A549 (cell line): ENCODE measurements at regions of chr5 and their contacts with region 1.

Region 1: DNA sequence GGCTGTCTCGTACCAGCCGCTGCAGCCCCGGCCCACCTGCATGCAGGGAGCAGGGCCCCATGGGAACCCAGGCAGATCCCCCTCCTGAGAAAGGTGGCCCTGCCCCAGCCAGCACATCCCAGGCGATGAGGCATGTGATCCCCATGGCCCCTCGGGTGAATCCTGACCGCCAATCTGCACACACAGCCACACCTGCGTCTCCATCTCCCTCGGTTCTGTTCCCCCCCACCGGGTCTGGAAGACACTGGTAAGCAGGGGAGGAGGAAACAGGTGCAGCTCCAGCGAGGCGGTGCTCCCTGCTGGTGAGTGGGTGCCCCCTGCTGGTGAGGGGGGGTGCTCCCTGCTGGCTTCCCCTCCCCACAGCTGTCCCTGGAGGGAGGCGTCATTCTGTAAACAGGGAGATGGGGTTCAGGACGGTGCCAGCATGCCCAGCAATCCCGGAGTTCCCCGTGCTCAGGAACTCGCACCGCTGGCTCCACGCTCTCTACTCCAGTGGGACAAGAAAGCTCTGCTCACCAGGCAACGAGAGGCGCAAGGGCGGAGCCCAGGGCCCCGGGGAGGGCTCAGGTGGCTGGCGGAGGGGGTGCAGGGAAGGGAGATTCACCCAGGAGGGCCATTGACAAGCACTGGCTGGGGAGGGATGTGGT is 28.4 kb upstream of the SLC12A7 start:
- DNase-seq: peak; percentile 67
- ATAC-seq: peak; percentile 74 to 87
- H3K4me3 ChIP-seq: no peak overlapping the region
- H3K27ac ChIP-seq: 0 out of 6 replicates have a peak overlapping the region, but pooled peaks of 1 of the 2 experiments have one; percentile 24
- H3K4me1 ChIP-seq: peaks cover 5% of the 10 kb centered on the region; the same call in 2 of the 3 replicates
- CTCF ChIP-seq: peak; percentile 82
- EP300 ChIP-seq: no peak
- POLR2A ChIP-seq: no peak
- RAD21 ChIP-seq: peak; percentile 89 to 91

Region 2: DNA sequence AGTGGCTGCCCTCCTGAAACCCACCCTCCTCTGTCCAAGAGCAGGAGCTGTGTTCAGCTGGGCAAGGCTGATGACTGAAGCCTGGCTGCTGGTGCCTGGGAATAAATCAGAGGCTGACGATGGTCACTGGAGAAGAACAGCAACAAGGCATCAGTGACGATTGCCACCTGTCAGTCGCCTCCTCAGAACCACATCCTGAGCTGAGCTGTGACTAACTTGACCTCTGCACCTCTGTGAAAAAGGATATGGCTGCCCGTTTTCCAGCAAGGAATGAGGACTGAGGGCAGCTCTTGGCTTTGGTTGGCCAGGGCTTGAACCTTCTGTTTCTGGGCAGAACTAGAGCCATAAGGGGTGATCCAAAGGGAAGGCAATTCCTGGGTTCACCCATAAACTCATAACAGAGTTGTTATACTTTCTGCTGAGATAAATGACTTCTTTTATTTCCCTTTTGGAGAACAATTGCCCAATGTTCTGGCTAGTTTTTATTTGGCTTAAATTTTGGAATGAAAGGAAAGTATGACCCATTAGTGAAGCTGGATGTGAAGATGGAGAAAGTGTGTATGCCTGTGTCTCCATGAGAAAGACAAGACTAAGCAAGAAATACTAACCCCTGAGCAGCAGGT is 207.6 kb before region 1 on chr5:
- CTCF ChIA-PET with region 1: interaction called, 11 read pairs
- POLR2A ChIA-PET with region 1: no interaction called
- DNase-seq: no peak
- ATAC-seq: no peak
- H3K4me3 ChIP-seq: no peak overlapping the region
- H3K27ac ChIP-seq: no peak overlapping the region
- H3K4me1 ChIP-seq: no peaks in the 10 kb centered on the region
- CTCF ChIP-seq: no peak
- EP300 ChIP-seq: no peak
- POLR2A ChIP-seq: no peak
- RAD21 ChIP-seq: no peak

Region 3: DNA sequence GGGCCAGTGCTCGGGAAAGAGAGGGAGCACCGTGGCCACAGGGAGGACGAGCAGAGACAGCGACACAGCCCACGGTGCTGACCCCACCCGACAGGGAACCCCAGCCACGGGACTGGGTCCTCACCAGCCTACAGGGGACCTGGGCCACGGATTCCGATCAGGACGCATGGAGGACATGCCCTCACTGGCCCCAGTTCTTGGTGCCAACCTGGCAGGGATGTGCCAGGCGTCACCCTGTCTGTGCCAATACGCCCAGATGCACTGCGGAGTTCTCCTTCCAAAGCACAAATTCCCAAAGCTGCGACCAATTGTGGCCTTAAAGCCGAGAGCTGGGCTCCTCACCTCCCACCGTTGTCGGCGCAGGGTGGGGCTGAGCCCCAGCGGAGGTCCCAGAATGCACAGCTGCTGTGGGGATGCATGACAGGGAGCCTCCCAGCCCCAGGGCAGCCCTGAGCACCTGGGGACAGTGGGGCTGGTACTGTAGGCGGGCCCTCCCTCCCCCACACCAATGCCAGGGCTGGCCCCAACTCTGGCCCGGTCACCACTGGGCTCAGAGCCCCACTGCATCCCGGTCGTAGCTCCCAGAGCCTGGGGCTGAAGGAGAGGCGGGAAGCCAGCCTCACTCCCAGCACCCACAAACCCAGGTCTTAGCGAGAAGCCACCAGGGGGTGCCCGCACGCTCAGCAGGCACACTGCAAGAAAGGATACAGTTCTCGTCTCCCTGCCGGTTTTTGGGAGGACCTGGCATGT is 87.5 kb before region 1 on chr5:
- CTCF ChIA-PET with region 1: interaction called, 25 read pairs
- POLR2A ChIA-PET with region 1: no interaction called
- DNase-seq: peak in 1 of 2 experiments; percentile 45
- ATAC-seq: peak in 1 of 2 experiments; percentile 52; a peak in 2 of 6 replicates
- H3K4me3 ChIP-seq: no peak overlapping the region
- H3K27ac ChIP-seq: no peak overlapping the region
- H3K4me1 ChIP-seq: no peaks in the 10 kb centered on the region
- CTCF ChIP-seq: 0 out of 3 replicates have a peak, but pooled peaks have one; percentile 16
- EP300 ChIP-seq: no peak
- POLR2A ChIP-seq: no peak
- RAD21 ChIP-seq: no peak

Region 4: DNA sequence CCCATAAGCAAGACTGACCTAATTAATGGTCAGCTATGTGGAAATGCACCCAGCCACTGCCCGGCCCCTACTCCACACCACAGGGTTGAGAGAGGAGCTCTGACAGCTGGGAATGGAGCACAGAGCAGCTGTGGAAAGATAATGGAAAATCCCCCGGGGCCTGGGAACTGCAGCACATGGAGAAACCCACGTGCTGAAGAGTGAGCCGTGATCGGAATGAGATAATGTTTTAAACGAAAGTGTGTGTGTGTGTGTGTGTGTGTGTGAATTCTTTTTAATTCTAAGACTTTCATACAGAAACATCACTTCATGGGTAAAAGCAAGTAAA is 15.3 kb before region 1 on chr5:
- CTCF ChIA-PET with region 1: interaction called, 47 read pairs
- POLR2A ChIA-PET with region 1: no interaction called
- DNase-seq: no peak
- ATAC-seq: no peak
- H3K4me3 ChIP-seq: no peak overlapping the region
- H3K27ac ChIP-seq: no peak overlapping the region
- H3K4me1 ChIP-seq: no peaks in the 10 kb centered on the region
- CTCF ChIP-seq: no peak
- EP300 ChIP-seq: no peak
- POLR2A ChIP-seq: no peak
- RAD21 ChIP-seq: no peak

Region 5: DNA sequence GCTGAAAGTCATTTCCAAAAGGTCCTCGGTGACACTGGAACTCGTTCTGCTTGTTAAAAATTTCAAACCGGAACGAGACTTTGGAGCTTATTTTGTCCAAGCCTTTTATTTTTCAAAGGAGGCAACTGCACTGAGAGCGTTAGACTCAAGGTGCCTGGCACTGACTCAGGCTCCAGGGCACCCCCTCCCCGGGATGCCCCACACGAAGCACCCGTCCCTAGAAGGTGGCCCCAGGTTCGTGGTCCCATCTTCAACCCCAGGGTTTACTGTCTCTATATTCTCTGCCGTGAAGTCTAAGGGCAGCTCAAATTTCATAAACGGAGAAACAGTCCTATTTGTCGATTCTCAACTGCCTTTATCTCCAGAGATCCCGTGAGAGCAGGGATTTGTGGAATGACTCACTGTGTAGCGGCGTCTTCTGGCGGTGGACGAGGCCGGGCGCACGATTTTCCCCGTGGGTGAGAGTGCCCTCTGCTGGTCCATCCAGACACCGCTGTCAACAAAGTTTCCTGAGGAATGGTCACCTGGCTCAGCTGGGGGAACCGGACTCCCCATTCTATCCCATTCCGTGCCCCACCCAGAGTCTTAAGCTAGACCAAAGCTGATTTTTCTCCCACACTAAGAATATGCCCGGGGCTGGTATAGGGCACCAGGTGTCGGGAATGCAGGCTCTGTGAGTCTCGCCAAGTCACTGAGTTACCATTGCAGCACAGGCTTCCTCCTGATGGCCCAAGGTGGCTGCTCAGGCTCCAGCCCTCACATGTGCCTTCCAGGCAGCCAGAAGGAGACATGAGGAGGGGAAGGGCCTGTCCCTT is 34.0 kb after region 1 on chr5:
- CTCF ChIA-PET with region 1: interaction called, 10 read pairs
- POLR2A ChIA-PET with region 1: no interaction called
- DNase-seq: peak; percentile 79 to 87
- ATAC-seq: peak; percentile 83 to 91
- H3K4me3 ChIP-seq: peak overlapping the region; percentile 33; the same call in 2 of the 3 replicates
- H3K27ac ChIP-seq: peak overlapping the region; percentile 73 to 74
- H3K4me1 ChIP-seq: peaks cover 5% of the 10 kb centered on the region
- CTCF ChIP-seq: peak; percentile 81
- EP300 ChIP-seq: no peak
- POLR2A ChIP-seq: no peak
- RAD21 ChIP-seq: peak; percentile 72 to 73

Region 6: GRCh38 chr5:1366514-1366913 is 226.2 kb after region 1 on chr5:
- CTCF ChIA-PET with region 1: no interaction called
- POLR2A ChIA-PET with region 1: no interaction called
- DNase-seq: no peak
- ATAC-seq: no peak
- H3K4me3 ChIP-seq: no peak overlapping the region
- H3K27ac ChIP-seq: no peak overlapping the region
- H3K4me1 ChIP-seq: no peaks in the 10 kb centered on the region
- CTCF ChIP-seq: no peak
- EP300 ChIP-seq: no peak
- POLR2A ChIP-seq: no peak
- RAD21 ChIP-seq: no peak